ENCODE measurements at regions of chr6 and their contacts with region 1.

Region 1: DNA sequence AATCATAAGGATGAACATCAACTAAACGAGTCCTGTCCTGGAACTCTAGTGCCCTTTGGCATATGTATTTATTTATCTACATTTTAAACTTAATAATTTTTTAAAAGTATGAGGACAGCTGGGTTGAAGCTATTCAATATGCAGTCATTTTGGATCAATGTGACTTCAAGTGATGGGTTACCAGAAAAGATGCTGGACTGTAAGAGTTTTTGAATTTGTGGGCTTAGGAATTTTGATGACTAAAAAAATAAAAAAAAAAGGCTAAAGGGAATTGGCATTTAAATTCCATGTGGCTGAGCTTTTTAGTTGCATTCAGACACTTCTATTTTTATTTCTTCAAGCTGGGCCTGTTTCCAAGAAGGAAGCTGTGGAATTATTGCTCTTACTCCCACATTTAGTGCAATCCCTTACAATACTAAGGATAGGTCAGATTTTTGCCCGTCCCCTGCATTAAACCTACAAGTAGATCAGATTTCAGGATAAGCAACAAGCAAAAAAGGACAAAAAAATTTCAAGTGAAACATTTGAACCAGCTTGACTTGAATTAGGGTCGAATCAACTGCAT is 704.2 kb upstream of the CITED2 start:
- DNase-seq: no peak
- H3K4me3 ChIP-seq: peak overlapping the region; percentile 3 to 17
- H3K27ac ChIP-seq: peak overlapping the region; percentile 73 to 77
- H3K4me1 ChIP-seq: peaks cover 0 to 20% of the 10 kb centered on the region in 2 donors
- H3K27me3 ChIP-seq: no peaks in the 10 kb centered on the region
- CTCF ChIP-seq: no peak

Region 2: DNA sequence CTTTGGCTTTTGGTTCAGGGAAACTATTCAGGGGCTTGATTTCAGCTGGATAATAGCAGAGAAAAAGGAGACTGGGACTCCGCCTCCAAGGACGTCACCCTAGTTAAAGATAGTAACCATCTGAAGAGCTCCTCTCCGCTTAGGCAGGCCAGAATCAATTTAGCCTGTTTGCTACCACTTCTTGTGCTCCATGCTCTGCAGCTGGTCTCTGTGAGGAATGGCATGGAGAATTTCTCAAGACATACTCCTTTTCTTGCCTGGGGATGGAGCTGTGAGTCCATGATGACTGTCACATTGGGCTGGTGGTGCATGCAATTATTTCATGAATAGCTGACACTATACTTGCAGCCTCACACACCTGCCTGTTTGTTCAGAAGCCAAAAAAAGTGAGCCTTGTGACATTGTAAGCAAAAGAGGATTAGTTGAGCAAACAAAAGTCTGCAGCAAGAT is 848.2 kb before region 1 on chr6:
- intact Hi-C with region 1: loop called (anchors 10 kb)
- DNase-seq: no peak
- H3K4me3 ChIP-seq: no peak overlapping the region
- H3K27ac ChIP-seq: no peak overlapping the region
- H3K4me1 ChIP-seq: no peaks in the 10 kb centered on the region
- H3K27me3 ChIP-seq: no peaks in the 10 kb centered on the region
- CTCF ChIP-seq: peak in 1 of 3 experiments; percentile 37

Region 3: DNA sequence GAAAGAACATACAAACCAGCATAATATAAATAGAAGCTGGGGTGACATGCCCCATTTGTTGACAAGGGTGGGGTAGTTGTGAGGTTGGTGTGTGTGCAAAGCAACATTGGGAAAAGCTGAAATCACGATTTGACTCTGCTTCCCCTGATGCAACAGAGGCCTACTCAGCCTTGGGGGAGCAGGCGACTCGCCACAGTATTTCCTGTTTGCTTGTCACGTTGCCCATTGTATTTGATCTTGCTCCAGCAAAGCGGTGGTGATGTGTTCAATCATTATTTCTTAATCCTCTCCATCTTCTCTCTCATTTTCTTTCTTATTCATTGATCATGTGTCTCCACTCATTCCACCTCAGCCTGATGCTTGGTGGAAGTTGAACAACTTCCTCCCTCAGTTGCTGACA is 538.4 kb before region 1 on chr6:
- intact Hi-C with region 1: loop called (anchors 10 kb)
- DNase-seq: peak in 1 of 2 donors; percentile 69
- H3K4me3 ChIP-seq: no peak overlapping the region
- H3K27ac ChIP-seq: peak overlapping the region; percentile 68 to 69
- H3K4me1 ChIP-seq: peaks cover 0 to 14% of the 10 kb centered on the region in 2 donors
- H3K27me3 ChIP-seq: no peaks in the 10 kb centered on the region
- CTCF ChIP-seq: no peak

Region 4: GRCh38 chr6:139764498-139764986 is 314.1 kb before region 1 on chr6:
- intact Hi-C with region 1: loop called (anchors 10 kb)
- DNase-seq: peak in 1 of 2 donors; percentile 71
- H3K4me3 ChIP-seq: peak overlapping the region in 1 of 2 donors; percentile 7
- H3K27ac ChIP-seq: peak overlapping the region; percentile 80 to 83
- H3K4me1 ChIP-seq: peaks cover 3 to 24% of the 10 kb centered on the region in 2 donors
- H3K27me3 ChIP-seq: no peaks in the 10 kb centered on the region
- CTCF ChIP-seq: no peak

Region 5: DNA sequence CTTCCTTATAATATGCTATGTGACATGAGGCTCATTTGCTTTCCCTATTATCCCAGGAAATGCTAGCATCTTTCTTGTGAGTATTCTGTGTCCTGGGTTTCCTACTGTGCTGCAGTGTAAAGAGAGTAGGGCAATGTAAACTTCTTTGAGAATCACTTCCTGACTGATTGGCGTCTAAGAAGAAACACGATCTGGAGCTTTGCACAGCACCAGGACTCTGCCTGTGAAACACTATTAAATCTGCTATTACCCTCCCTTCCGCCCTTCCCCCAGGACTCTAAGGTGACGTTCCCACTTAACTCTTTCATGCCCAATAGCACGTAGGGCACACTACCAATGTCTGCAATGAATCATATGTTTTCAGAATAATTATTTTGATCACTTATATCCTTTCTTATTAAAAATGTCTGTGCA is 96.9 kb before region 1 on chr6:
- intact Hi-C with region 1: loop called (anchors 5 kb)
- DNase-seq: no peak
- H3K4me3 ChIP-seq: no peak overlapping the region
- H3K27ac ChIP-seq: peak overlapping the region; percentile 28 to 74
- H3K4me1 ChIP-seq: peaks cover 0 to 22% of the 10 kb centered on the region in 2 donors
- H3K27me3 ChIP-seq: no peaks in the 10 kb centered on the region
- CTCF ChIP-seq: no peak

Region 6: DNA sequence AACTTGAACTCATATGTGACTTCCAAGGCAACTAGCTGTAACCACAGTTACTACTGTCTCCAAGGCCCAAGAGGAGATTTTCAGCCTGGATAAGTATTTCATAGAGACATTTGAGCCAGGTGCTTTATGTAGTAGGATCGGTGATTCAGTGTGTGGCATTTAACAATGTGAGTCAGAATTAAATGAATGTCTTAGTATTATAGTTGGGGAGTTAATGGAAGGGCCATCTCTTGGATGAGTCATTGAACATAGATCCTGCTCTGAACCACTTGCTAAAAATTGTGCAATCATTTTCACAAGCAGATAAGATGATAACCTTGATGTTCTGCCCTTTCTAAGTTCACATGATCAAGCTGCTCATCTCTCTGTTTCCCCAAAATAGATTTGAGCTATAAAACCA is 35.3 kb before region 1 on chr6:
- intact Hi-C with region 1: no loop called
- DNase-seq: no peak
- H3K4me3 ChIP-seq: no peak overlapping the region
- H3K27ac ChIP-seq: no peak overlapping the region
- H3K4me1 ChIP-seq: no peaks in the 10 kb centered on the region
- H3K27me3 ChIP-seq: no peaks in the 10 kb centered on the region
- CTCF ChIP-seq: no peak

Region 7: GRCh38 chr6:140091897-140092296 is 13.3 kb after region 1 on chr6:
- intact Hi-C with region 1: no loop called
- DNase-seq: no peak
- H3K4me3 ChIP-seq: no peak overlapping the region
- H3K27ac ChIP-seq: no peak overlapping the region
- H3K4me1 ChIP-seq: no peaks in the 10 kb centered on the region
- H3K27me3 ChIP-seq: no peaks in the 10 kb centered on the region
- CTCF ChIP-seq: no peak

Region 8: GRCh38 chr6:140979642-140980091 is 901.0 kb after region 1 on chr6:
- intact Hi-C with region 1: loop called (anchors 10 kb)
- DNase-seq: peak; percentile 9 to 87
- H3K4me3 ChIP-seq: peak overlapping the region; percentile 13 to 29
- H3K27ac ChIP-seq: peak overlapping the region; percentile 76 to 79
- H3K4me1 ChIP-seq: peaks cover 4 to 24% of the 10 kb centered on the region in 2 donors
- H3K27me3 ChIP-seq: no peaks in the 10 kb centered on the region
- CTCF ChIP-seq: no peak

Measured in ascending aorta (tissue), 2 donors.